Colonic mucosa (tissue), 4 donors: ENCODE measurements at regions of chr2 and their contacts with region 1.

Region 1: DNA sequence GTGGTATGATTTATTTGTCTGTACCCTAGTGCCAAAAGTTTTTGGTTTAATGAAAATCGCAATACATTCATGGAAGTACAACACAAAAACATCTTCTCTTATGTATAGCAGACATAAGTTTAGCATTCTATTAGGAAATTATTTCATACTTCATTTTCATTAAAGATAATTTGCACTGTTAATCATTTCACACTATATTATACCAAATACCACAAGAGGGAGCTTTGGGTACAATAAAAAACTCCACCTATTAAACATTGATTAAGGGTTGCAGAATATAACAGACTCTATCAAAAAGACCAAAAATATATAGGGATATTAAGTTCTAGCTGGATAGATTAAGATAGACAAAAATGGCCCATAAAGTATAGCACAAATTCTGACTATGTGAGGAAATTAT is 79.0 kb downstream of the SLC66A3 start:
- DNase-seq: no peak
- H3K4me3 ChIP-seq: no peak overlapping the region
- H3K27ac ChIP-seq: no peak overlapping the region
- H3K4me1 ChIP-seq: no peaks in the 10 kb centered on the region
- H3K27me3 ChIP-seq: no peaks in the 10 kb centered on the region
- CTCF ChIP-seq: peak; percentile 14

Region 2: GRCh38 chr2:11320698-11321492 is 86.6 kb after region 1 on chr2:
- intact Hi-C with region 1: loop called (anchors 10 kb)
- DNase-seq: no peak
- H3K4me3 ChIP-seq: no peak overlapping the region
- H3K27ac ChIP-seq: no peak overlapping the region
- H3K4me1 ChIP-seq: no peaks in the 10 kb centered on the region
- H3K27me3 ChIP-seq: no peaks in the 10 kb centered on the region
- CTCF ChIP-seq: no peak

Region 3: GRCh38 chr2:11411768-11412448 is 177.6 kb after region 1 on chr2:
- intact Hi-C with region 1: loop called (anchors 1 kb)
- DNase-seq: peak; percentile 77
- H3K4me3 ChIP-seq: peak overlapping the region; percentile 31
- H3K27ac ChIP-seq: peak overlapping the region; percentile 3
- H3K4me1 ChIP-seq: peaks cover 8% of the 10 kb centered on the region
- H3K27me3 ChIP-seq: no peaks in the 10 kb centered on the region
- CTCF ChIP-seq: peak; percentile 68

Region 4: DNA sequence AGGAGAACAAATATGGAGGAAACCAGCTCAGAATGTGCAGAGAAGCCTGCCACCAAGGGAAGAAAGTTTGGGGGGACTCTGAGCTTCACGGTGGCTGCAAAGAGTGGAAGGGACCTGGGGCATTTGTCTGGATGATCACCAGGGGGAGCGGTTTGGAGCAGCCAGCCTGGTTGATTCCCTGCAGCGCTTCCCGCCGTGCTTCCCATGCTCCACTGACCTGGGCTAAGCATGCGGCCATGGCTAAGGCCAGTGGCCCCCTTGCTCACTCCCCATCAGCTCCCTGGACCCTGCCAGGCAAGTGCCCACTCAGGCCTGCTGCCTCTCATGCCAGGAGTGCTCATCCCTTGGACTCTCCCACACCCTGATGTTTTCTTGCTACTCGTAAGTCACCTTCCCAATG is 408.7 kb after region 1 on chr2:
- intact Hi-C with region 1: no loop called
- DNase-seq: no peak
- H3K4me3 ChIP-seq: no peak overlapping the region
- H3K27ac ChIP-seq: no peak overlapping the region
- H3K4me1 ChIP-seq: no peaks in the 10 kb centered on the region
- H3K27me3 ChIP-seq: no peaks in the 10 kb centered on the region
- CTCF ChIP-seq: no peak